Activated CD8-positive, alpha-beta T cell treated with anti-CD3 and anti-CD28 coated beads for 36 hours (primary cell): ENCODE measurements at regions of chr9 and their contacts with region 1.

Region 1: GRCh38 chr9:127734747-127735529 is at the start of gene TOR2A:
- DNase-seq: peak; percentile 99
- ATAC-seq: peak; percentile 92
- H3K4me3 Mint-ChIP-seq: peak within 1 kb of the TSS; percentile 77
- H3K27ac Mint-ChIP-seq: peak within 1 kb of the TSS; percentile 86
- H3K4me1 Mint-ChIP-seq: peaks cover 15% of the 10 kb centered on the region
- H3K27me3 Mint-ChIP-seq: no peaks in the 10 kb centered on the region
- CTCF ChIP-seq: peak; percentile 76
- total RNA-seq, gene TOR2A: 14.4 to 16.1 TPM

Region 2: GRCh38 chr9:127525401-127526187 is 209.3 kb before region 1 on chr9:
- CTCF ChIA-PET with region 1: interaction called, 23 read pairs
- POLR2A ChIA-PET with region 1: no interaction called
- intact Hi-C with region 1: no loop called
- DNase-seq: peak; percentile 55
- ATAC-seq: peak; percentile 68
- H3K4me3 Mint-ChIP-seq: no peak overlapping the region
- H3K27ac Mint-ChIP-seq: no peak overlapping the region
- H3K4me1 Mint-ChIP-seq: no peaks in the 10 kb centered on the region
- H3K27me3 Mint-ChIP-seq: no peaks in the 10 kb centered on the region
- CTCF ChIP-seq: peak; percentile 74

Region 3: GRCh38 chr9:127603226-127603625 is 131.7 kb before region 1 on chr9:
- CTCF ChIA-PET with region 1: interaction called, 15 read pairs
- POLR2A ChIA-PET with region 1: interaction called, 4 read pairs
- intact Hi-C with region 1: no loop called
- DNase-seq: no peak
- ATAC-seq: no peak
- H3K4me3 Mint-ChIP-seq: no peak overlapping the region
- H3K27ac Mint-ChIP-seq: no peak overlapping the region
- H3K4me1 Mint-ChIP-seq: peaks cover 8% of the 10 kb centered on the region
- H3K27me3 Mint-ChIP-seq: no peaks in the 10 kb centered on the region
- CTCF ChIP-seq: no peak

Region 4: GRCh38 chr9:127715394-127716337 is 19.3 kb before region 1 on chr9 and contains the starts of genes PTRH1 and TTC16:
- CTCF ChIA-PET with region 1: interaction called, 25 read pairs
- POLR2A ChIA-PET with region 1: interaction called, 13 read pairs
- intact Hi-C with region 1: no loop called
- DNase-seq: peak; percentile 98
- ATAC-seq: peak; percentile 95
- H3K4me3 Mint-ChIP-seq: peak within 1 kb of the TSS; percentile 89
- H3K27ac Mint-ChIP-seq: peak within 1 kb of the TSS; percentile 93
- H3K4me1 Mint-ChIP-seq: peaks cover 36% of the 10 kb centered on the region
- H3K27me3 Mint-ChIP-seq: no peaks in the 10 kb centered on the region
- CTCF ChIP-seq: no peak
- total RNA-seq, gene PTRH1: 15.9 to 16.0 TPM
- total RNA-seq, gene TTC16: 2.1 to 2.3 TPM

Region 5: GRCh38 chr9:127785023-127785932 is 50.3 kb after region 1 on chr9:
- CTCF ChIA-PET with region 1: interaction called, 58 read pairs
- POLR2A ChIA-PET with region 1: interaction called, 12 read pairs
- intact Hi-C with region 1: loop called (anchors 5 kb)
- DNase-seq: peak; percentile 90
- ATAC-seq: peak; percentile 37
- H3K4me3 Mint-ChIP-seq: peak overlapping the region; percentile 97
- H3K27ac Mint-ChIP-seq: peak overlapping the region; percentile 95
- H3K4me1 Mint-ChIP-seq: peaks cover 72% of the 10 kb centered on the region
- H3K27me3 Mint-ChIP-seq: no peaks in the 10 kb centered on the region
- CTCF ChIP-seq: peak; percentile 86

Region 6: GRCh38 chr9:127844821-127845359 is 110.0 kb after region 1 on chr9:
- CTCF ChIA-PET with region 1: no interaction called
- POLR2A ChIA-PET with region 1: no interaction called
- intact Hi-C with region 1: no loop called
- DNase-seq: no peak
- ATAC-seq: no peak
- H3K4me3 Mint-ChIP-seq: no peak overlapping the region
- H3K27ac Mint-ChIP-seq: no peak overlapping the region
- H3K4me1 Mint-ChIP-seq: no peaks in the 10 kb centered on the region
- H3K27me3 Mint-ChIP-seq: no peaks in the 10 kb centered on the region
- CTCF ChIP-seq: no peak

Region 7: GRCh38 chr9:127916665-127917613 is 182.0 kb after region 1 on chr9 and contains the start of gene ST6GALNAC4:
- CTCF ChIA-PET with region 1: interaction called, 43 read pairs
- POLR2A ChIA-PET with region 1: interaction called, 8 read pairs
- intact Hi-C with region 1: no loop called
- DNase-seq: peak; percentile 97
- ATAC-seq: peak; percentile 96
- H3K4me3 Mint-ChIP-seq: peak within 1 kb of the TSS; percentile 87
- H3K27ac Mint-ChIP-seq: peak within 1 kb of the TSS; percentile 93
- H3K4me1 Mint-ChIP-seq: peaks cover 53% of the 10 kb centered on the region
- H3K27me3 Mint-ChIP-seq: no peaks in the 10 kb centered on the region
- CTCF ChIP-seq: no peak
- total RNA-seq, gene ST6GALNAC4: 34.3 to 34.9 TPM